ENCODE measurements at regions of chr15 and their contacts with region 1.

Region 1: GRCh38 chr15:40660686-40661085 is 34.3 kb upstream of the RAD51 start:
- DNase-seq: no peak
- ATAC-seq: no peak
- H3K4me3 ChIP-seq: no peak overlapping the region
- H3K4me3 Mint-ChIP-seq: no peak overlapping the region
- H3K27ac ChIP-seq: no peak overlapping the region
- H3K27ac Mint-ChIP-seq: no peak overlapping the region
- H3K4me1 ChIP-seq: no peaks in the 10 kb centered on the region
- H3K4me1 Mint-ChIP-seq: no peaks in the 10 kb centered on the region
- H3K27me3 ChIP-seq: no peaks in the 10 kb centered on the region
- H3K27me3 Mint-ChIP-seq: no peaks in the 10 kb centered on the region
- CTCF ChIP-seq: no peak

Region 2: GRCh38 chr15:40633143-40633542 is 27.5 kb before region 1 on chr15:
- CTCF ChIA-PET with region 1: no interaction called
- POLR2A ChIA-PET with region 1: no interaction called
- intact Hi-C with region 1: loop called in 1 of 2 experiments (anchors 5 kb)
- DNase-seq: no peak
- ATAC-seq: no peak
- H3K4me3 ChIP-seq: no peak overlapping the region
- H3K4me3 Mint-ChIP-seq: no peak overlapping the region
- H3K27ac ChIP-seq: no peak overlapping the region
- H3K27ac Mint-ChIP-seq: no peak overlapping the region
- H3K4me1 ChIP-seq: no peaks in the 10 kb centered on the region
- H3K4me1 Mint-ChIP-seq: no peaks in the 10 kb centered on the region
- H3K27me3 ChIP-seq: no peaks in the 10 kb centered on the region
- H3K27me3 Mint-ChIP-seq: no peaks in the 10 kb centered on the region
- CTCF ChIP-seq: no peak